PC-3 (cell line): ENCODE measurements at regions of chr5 and their contacts with region 1.

Region 1: GRCh38 chr5:9544502-9545135 is 1.3 kb downstream of the SEMA5A start:
- DNase-seq: peak; percentile 97
- ATAC-seq: peak; percentile 65
- H3K4me3 ChIP-seq: peak overlapping the region; percentile 76
- H3K27ac ChIP-seq: no peak overlapping the region
- H3K4me1 ChIP-seq: peaks cover 9% of the 10 kb centered on the region; the same call in 1 of the 2 replicates
- H3K27me3 ChIP-seq: no peaks in the 10 kb centered on the region
- CTCF ChIP-seq: peak; percentile 99

Region 2: GRCh38 chr5:9156282-9156681 is 388.3 kb before region 1 on chr5:
- CTCF ChIA-PET with region 1: no interaction called
- POLR2A ChIA-PET with region 1: no interaction called
- intact Hi-C with region 1: loop called (anchors 1 kb)
- DNase-seq: peak; percentile 86
- ATAC-seq: peak; percentile 87
- H3K4me3 ChIP-seq: no peak overlapping the region
- H3K27ac ChIP-seq: no peak overlapping the region
- H3K4me1 ChIP-seq: peaks cover 14% of the 10 kb centered on the region
- H3K27me3 ChIP-seq: no peaks in the 10 kb centered on the region
- CTCF ChIP-seq: peak; percentile 95

Region 3: DNA sequence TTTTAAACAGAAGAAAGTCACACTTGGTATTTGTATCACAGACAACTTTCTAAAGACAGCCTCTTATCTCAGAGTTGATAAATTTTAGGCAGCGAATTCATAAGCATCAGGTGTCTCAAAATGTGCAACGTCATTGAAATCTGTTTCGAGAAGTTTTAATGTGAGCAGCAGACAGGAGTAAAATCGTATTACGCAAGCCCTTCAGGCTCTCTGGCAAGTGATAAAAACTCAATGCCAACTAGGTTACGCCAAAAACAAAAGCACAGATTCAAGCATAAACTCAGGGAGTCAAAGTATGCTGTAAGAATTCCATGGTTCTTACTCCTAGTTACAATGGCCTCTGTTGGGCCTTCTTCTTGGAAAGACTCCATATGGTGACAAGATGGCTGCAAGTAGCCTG is 243.4 kb before region 1 on chr5:
- CTCF ChIA-PET with region 1: no interaction called
- POLR2A ChIA-PET with region 1: interaction called, 11 read pairs
- intact Hi-C with region 1: no loop called
- DNase-seq: no peak
- ATAC-seq: no peak
- H3K4me3 ChIP-seq: no peak overlapping the region
- H3K27ac ChIP-seq: no peak overlapping the region
- H3K4me1 ChIP-seq: no peaks in the 10 kb centered on the region
- H3K27me3 ChIP-seq: no peaks in the 10 kb centered on the region
- CTCF ChIP-seq: no peak

Region 4: GRCh38 chr5:9440517-9440916 is 104.1 kb before region 1 on chr5:
- CTCF ChIA-PET with region 1: interaction called, 6 read pairs
- POLR2A ChIA-PET with region 1: no interaction called
- intact Hi-C with region 1: loop called (anchors 5 kb)
- DNase-seq: peak; percentile 98
- ATAC-seq: peak; percentile 85
- H3K4me3 ChIP-seq: no peak overlapping the region; the same call in 1 of the 2 replicates
- H3K27ac ChIP-seq: peak overlapping the region; percentile 93
- H3K4me1 ChIP-seq: peaks cover 48% of the 10 kb centered on the region
- H3K27me3 ChIP-seq: no peaks in the 10 kb centered on the region
- CTCF ChIP-seq: no peak

Region 5: DNA sequence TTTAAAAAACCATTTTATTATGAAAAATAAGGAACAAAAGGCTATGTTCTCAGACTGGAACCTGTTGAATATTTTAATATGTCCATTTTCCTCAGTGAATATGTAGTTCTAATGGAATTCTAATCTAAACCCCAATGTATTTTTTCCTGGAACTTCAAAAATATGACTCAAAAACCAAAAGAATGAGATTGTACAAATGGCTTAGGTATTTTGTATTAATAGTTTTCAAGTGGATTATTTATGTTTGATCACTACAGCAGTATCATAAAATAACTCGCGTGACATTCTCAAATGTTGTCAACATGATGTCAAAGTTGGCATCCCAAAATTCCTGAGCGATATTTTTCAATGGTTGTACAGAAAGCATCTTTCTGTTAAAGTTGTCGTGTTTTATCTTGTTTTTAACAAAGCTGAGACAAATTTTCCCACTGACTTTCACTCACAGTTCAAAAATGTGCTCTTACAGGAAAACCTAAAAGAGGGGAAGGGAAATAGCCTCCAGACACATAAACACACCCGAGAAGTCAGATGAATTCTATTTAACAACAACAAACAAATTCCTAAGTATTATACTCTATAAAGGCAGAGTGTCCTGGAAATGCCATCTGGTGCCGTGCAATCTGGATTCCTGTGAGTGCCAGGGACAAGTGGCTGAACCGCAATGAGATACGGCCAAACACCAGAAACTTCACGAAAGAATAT is 153.7 kb after region 1 on chr5:
- CTCF ChIA-PET with region 1: no interaction called
- POLR2A ChIA-PET with region 1: no interaction called
- intact Hi-C with region 1: no loop called
- DNase-seq: no peak
- ATAC-seq: no peak
- H3K4me3 ChIP-seq: no peak overlapping the region
- H3K27ac ChIP-seq: no peak overlapping the region
- H3K4me1 ChIP-seq: no peaks in the 10 kb centered on the region
- H3K27me3 ChIP-seq: no peaks in the 10 kb centered on the region
- CTCF ChIP-seq: no peak

Region 6: DNA sequence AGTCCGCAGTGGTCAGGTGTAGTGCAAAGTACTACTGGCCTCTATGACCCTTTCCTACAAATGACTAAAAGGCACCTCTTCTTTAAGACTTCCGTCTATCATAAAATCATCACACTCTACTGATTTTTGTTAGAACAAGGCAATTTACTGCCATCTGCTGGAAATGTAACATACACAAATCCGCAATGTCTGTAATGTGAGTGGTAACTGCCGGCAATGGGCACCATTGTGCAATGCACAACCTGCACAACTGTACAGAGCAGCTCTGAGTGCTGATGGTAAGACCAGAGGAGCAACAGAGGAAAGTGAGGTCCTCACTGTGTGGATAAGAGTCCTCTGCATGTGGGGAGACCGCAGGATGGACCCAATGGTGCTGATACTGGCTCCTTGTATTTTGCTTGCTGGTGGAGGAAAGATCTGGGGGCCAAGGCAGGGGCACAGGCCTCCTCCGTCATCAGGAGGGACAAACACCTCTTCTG is 601.3 kb after region 1 on chr5:
- CTCF ChIA-PET with region 1: no interaction called
- POLR2A ChIA-PET with region 1: no interaction called
- intact Hi-C with region 1: loop called (anchors 10 kb)
- DNase-seq: peak; percentile 87
- ATAC-seq: peak; percentile 91
- H3K4me3 ChIP-seq: no peak overlapping the region
- H3K27ac ChIP-seq: no peak overlapping the region
- H3K4me1 ChIP-seq: no peaks in the 10 kb centered on the region
- H3K27me3 ChIP-seq: no peaks in the 10 kb centered on the region
- CTCF ChIP-seq: peak; percentile 91